ENCODE measurements at regions of chr19 and their contacts with region 1.

Region 1: GRCh38 chr19:29610563-29611271 is 4.6 kb downstream of the POP4 start:
- DNase-seq: peak; percentile 91
- H3K4me3 Mint-ChIP-seq: no peak overlapping the region
- H3K27ac Mint-ChIP-seq: peak overlapping the region; percentile 61
- H3K4me1 Mint-ChIP-seq: peaks cover 25% of the 10 kb centered on the region
- H3K27me3 Mint-ChIP-seq: no peaks in the 10 kb centered on the region

Region 2: GRCh38 chr19:29622138-29623070 is 11.7 kb after region 1 on chr19:
- CTCF ChIA-PET with region 1: interaction called, 32 read pairs
- POLR2A ChIA-PET with region 1: interaction called, 6 read pairs
- DNase-seq: peak; percentile 53
- H3K4me3 Mint-ChIP-seq: peak overlapping the region; percentile 77
- H3K27ac Mint-ChIP-seq: peak overlapping the region; percentile 97
- H3K4me1 Mint-ChIP-seq: peaks cover 57% of the 10 kb centered on the region
- H3K27me3 Mint-ChIP-seq: no peaks in the 10 kb centered on the region

Region 3: GRCh38 chr19:29671393-29672160 is 60.9 kb after region 1 on chr19:
- CTCF ChIA-PET with region 1: interaction called, 49 read pairs
- POLR2A ChIA-PET with region 1: interaction called, 6 read pairs
- DNase-seq: peak; percentile 88
- H3K4me3 Mint-ChIP-seq: peak overlapping the region; percentile 88
- H3K27ac Mint-ChIP-seq: peak overlapping the region; percentile 95
- H3K4me1 Mint-ChIP-seq: peaks cover 86% of the 10 kb centered on the region
- H3K27me3 Mint-ChIP-seq: no peaks in the 10 kb centered on the region

Region 4: GRCh38 chr19:29694669-29695627 is 84.2 kb after region 1 on chr19:
- CTCF ChIA-PET with region 1: interaction called, 29 read pairs
- POLR2A ChIA-PET with region 1: no interaction called
- DNase-seq: peak; percentile 84
- H3K4me3 Mint-ChIP-seq: no peak overlapping the region
- H3K27ac Mint-ChIP-seq: peak overlapping the region; percentile 67
- H3K4me1 Mint-ChIP-seq: peaks cover 22% of the 10 kb centered on the region
- H3K27me3 Mint-ChIP-seq: no peaks in the 10 kb centered on the region